ENCODE measurements at regions of chrX and their contacts with region 1.

Region 1: GRCh38 chrX:100768679-100769338 is 36.9 kb upstream of the SYTL4 start:
- DNase-seq: peak; percentile 74 to 77 (median 76)
- ATAC-seq: peak; percentile 99 to 100 (median 100)
- H3K4me3 ChIP-seq: no peak overlapping the region
- H3K27ac ChIP-seq: no peak overlapping the region
- H3K4me1 ChIP-seq: no peaks in the 10 kb centered on the region
- H3K27me3 ChIP-seq: peaks cover 0 to 7% of the 10 kb centered on the region in 2 donors
- CTCF ChIP-seq: peak; percentile 99 to 100 (median 100)
- POLR2A ChIP-seq: no peak

Region 2: GRCh38 chrX:100685284-100685996 is 83.4 kb before region 1 on chrX:
- intact Hi-C with region 1: loop called (anchors 5 kb)
- DNase-seq: peak in 2 of 3 donors; percentile 25 to 56
- ATAC-seq: peak; percentile 97 to 99 (median 97)
- H3K4me3 ChIP-seq: no peak overlapping the region
- H3K27ac ChIP-seq: no peak overlapping the region
- H3K4me1 ChIP-seq: no peaks in the 10 kb centered on the region
- H3K27me3 ChIP-seq: no peaks in the 10 kb centered on the region
- CTCF ChIP-seq: peak; percentile 87 to 99 (median 90)
- POLR2A ChIP-seq: no peak